ENCODE measurements at regions of chr1 and their contacts with region 1.

Region 1: DNA sequence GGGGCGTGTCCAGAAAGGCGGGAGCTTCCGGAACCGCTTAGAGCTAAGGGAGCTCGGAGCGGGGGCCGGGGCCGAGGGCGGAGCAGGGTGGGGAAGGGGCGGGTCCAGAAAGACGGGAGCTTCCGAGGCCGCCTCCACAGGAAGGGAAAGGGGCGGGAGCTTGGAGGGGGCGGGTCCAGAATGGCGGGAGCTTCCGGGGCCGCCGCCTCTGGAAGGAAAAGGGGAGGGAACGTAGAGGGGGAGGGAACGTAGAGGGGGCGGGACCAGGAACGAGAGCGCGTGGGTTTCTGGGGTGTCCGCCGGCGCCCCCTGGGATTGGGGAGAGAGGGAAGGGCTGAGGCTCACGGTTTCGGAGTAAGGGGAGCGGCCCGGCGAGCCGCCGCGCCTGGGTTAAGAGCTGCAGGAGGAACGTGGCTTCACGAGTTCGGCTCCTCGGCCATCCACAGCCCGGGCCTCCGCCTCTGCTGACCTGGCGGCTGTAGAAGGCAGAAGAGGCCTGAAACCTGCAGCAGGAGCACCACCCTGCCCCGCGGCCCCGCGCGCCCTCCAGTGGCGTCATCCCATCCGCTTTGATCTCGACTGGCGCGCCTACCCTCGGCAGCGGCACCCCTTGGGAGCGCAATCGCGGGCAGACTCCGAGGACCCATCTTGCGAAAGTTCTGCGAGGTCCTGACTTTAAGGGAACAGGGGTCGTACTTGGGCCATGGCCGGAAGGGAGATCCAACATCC is 22.9 kb upstream of the HPDL start:
- DNase-seq: peak; percentile 98
- ATAC-seq: peak; percentile 84
- H3K4me3 ChIP-seq: peak overlapping the region; percentile 47 to 87 (median 82)
- H3K4me3 Mint-ChIP-seq: peak overlapping the region; percentile 94
- H3K27ac ChIP-seq: peak overlapping the region; percentile 85 to 97
- H3K27ac Mint-ChIP-seq: peak overlapping the region; percentile 95
- H3K4me1 ChIP-seq: peaks cover 19 to 27% of the 10 kb centered on the region in 2 donors
- H3K4me1 Mint-ChIP-seq: peaks cover 34% of the 10 kb centered on the region
- H3K27me3 ChIP-seq: no peaks in the 10 kb centered on the region
- H3K27me3 Mint-ChIP-seq: no peaks in the 10 kb centered on the region
- CTCF ChIP-seq: peak; percentile 74

Region 2: GRCh38 chr1:44721485-44722361 is 582.0 kb before region 1 on chr1:
- CTCF ChIA-PET with region 1: interaction called, 6 read pairs
- POLR2A ChIA-PET with region 1: interaction called, 24 read pairs
- intact Hi-C with region 1: no loop called
- DNase-seq: peak; percentile 91
- ATAC-seq: peak; percentile 80
- H3K4me3 ChIP-seq: peak overlapping the region in 3 of 5 experiments; percentile 8 to 21 (median 15)
- H3K4me3 Mint-ChIP-seq: peak overlapping the region; percentile 78
- H3K27ac ChIP-seq: peak overlapping the region; percentile 88 to 93
- H3K27ac Mint-ChIP-seq: peak overlapping the region; percentile 99
- H3K4me1 ChIP-seq: peaks cover 43 to 48% of the 10 kb centered on the region in 2 donors
- H3K4me1 Mint-ChIP-seq: peaks cover 62% of the 10 kb centered on the region
- H3K27me3 ChIP-seq: no peaks in the 10 kb centered on the region
- H3K27me3 Mint-ChIP-seq: no peaks in the 10 kb centered on the region
- CTCF ChIP-seq: no peak

Region 3: GRCh38 chr1:44786138-44786840 is 517.5 kb before region 1 on chr1:
- CTCF ChIA-PET with region 1: interaction called, 7 read pairs
- POLR2A ChIA-PET with region 1: interaction called, 3 read pairs
- intact Hi-C with region 1: loop called (anchors 1 kb)
- DNase-seq: peak; percentile 88
- ATAC-seq: peak; percentile 72
- H3K4me3 ChIP-seq: peak overlapping the region in 4 of 5 experiments; percentile 53 to 68 (median 60)
- H3K4me3 Mint-ChIP-seq: peak overlapping the region; percentile 82
- H3K27ac ChIP-seq: peak overlapping the region; percentile 47 to 50
- H3K27ac Mint-ChIP-seq: peak overlapping the region; percentile 92
- H3K4me1 ChIP-seq: peaks cover 25 to 34% of the 10 kb centered on the region in 2 donors
- H3K4me1 Mint-ChIP-seq: peaks cover 31% of the 10 kb centered on the region
- H3K27me3 ChIP-seq: no peaks in the 10 kb centered on the region
- H3K27me3 Mint-ChIP-seq: no peaks in the 10 kb centered on the region
- CTCF ChIP-seq: peak; percentile 100

Region 4: GRCh38 chr1:44835738-44836675 is 467.7 kb before region 1 on chr1:
- CTCF ChIA-PET with region 1: interaction called, 7 read pairs
- POLR2A ChIA-PET with region 1: interaction called, 3 read pairs
- intact Hi-C with region 1: loop called (anchors 1 kb)
- DNase-seq: peak; percentile 89
- ATAC-seq: peak; percentile 98
- H3K4me3 ChIP-seq: no peak overlapping the region
- H3K4me3 Mint-ChIP-seq: peak overlapping the region; percentile 62
- H3K27ac ChIP-seq: no peak overlapping the region
- H3K27ac Mint-ChIP-seq: peak overlapping the region; percentile 55
- H3K4me1 ChIP-seq: peaks cover 0 to 7% of the 10 kb centered on the region in 2 donors
- H3K4me1 Mint-ChIP-seq: peaks cover 11% of the 10 kb centered on the region
- H3K27me3 ChIP-seq: no peaks in the 10 kb centered on the region
- H3K27me3 Mint-ChIP-seq: peaks cover 6% of the 10 kb centered on the region
- CTCF ChIP-seq: peak; percentile 85

Region 5: DNA sequence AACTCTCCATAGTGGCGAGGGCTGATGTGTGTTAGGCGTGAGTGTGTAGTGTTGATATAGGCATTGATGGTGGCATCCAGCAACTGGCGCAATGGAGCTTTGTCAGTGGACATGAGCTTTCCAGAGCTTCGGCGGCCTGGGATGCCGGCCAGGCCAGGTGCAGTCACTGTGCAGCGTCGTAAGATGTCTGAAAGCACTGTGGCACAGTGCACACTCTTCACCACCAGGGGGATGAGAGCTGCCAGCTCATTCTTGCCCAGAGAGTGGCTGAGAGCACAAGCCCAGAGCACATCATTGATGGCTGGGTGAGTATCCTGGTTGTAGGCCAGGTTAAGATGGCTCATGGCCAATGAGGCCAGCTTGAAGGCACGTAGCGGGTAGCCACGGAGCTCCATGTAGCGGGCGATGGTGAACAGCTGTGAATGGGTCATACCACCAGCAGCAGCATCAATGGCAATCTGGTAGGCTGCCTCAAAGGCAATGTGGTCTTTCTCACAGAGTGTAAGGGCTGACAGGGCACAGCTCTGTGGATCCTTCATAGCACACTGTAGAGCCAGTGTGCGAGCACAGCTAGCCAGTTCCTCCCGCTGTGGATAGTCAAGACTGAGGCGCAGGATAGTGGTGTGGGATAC is 285.0 kb before region 1 on chr1:
- CTCF ChIA-PET with region 1: interaction called, 388 read pairs
- POLR2A ChIA-PET with region 1: interaction called, 59 read pairs
- intact Hi-C with region 1: loop called (anchors 1 kb)
- DNase-seq: peak; percentile 67
- ATAC-seq: peak; percentile 67
- H3K4me3 ChIP-seq: no peak overlapping the region
- H3K4me3 Mint-ChIP-seq: no peak overlapping the region
- H3K27ac ChIP-seq: no peak overlapping the region
- H3K27ac Mint-ChIP-seq: no peak overlapping the region
- H3K4me1 ChIP-seq: peaks cover 0 to 6% of the 10 kb centered on the region in 2 donors
- H3K4me1 Mint-ChIP-seq: peaks cover 13% of the 10 kb centered on the region
- H3K27me3 ChIP-seq: no peaks in the 10 kb centered on the region
- H3K27me3 Mint-ChIP-seq: no peaks in the 10 kb centered on the region
- CTCF ChIP-seq: peak; percentile 73

Region 6: GRCh38 chr1:45393718-45394302 is 90.1 kb after region 1 on chr1:
- CTCF ChIA-PET with region 1: no interaction called
- POLR2A ChIA-PET with region 1: interaction called, 5 read pairs
- intact Hi-C with region 1: loop called (anchors 1 kb)
- DNase-seq: peak; percentile 82
- ATAC-seq: peak; percentile 82
- H3K4me3 ChIP-seq: peak overlapping the region in 4 of 5 experiments; percentile 1 to 52 (median 24)
- H3K4me3 Mint-ChIP-seq: peak overlapping the region; percentile 82
- H3K27ac ChIP-seq: peak overlapping the region; percentile 96 to 99
- H3K27ac Mint-ChIP-seq: peak overlapping the region; percentile 99
- H3K4me1 ChIP-seq: peaks cover 35 to 37% of the 10 kb centered on the region in 2 donors
- H3K4me1 Mint-ChIP-seq: peaks cover 44% of the 10 kb centered on the region
- H3K27me3 ChIP-seq: no peaks in the 10 kb centered on the region
- H3K27me3 Mint-ChIP-seq: no peaks in the 10 kb centered on the region
- CTCF ChIP-seq: no peak